ENCODE measurements at regions of chr2 and their contacts with region 1.

Region 1: GRCh38 chr2:75466708-75467311 is 93.9 kb downstream of the EVA1A start:
- DNase-seq: peak; percentile 22
- H3K4me3 ChIP-seq: peak overlapping the region in 1 of 2 experiments; percentile 37; a peak in 1 of 4 replicates
- H3K27ac ChIP-seq: no peak overlapping the region
- H3K4me1 ChIP-seq: peaks cover 0 to 6% of the 10 kb centered on the region in 2 experiments; a peak in 3 of 4 replicates
- H3K27me3 ChIP-seq: no peaks in the 10 kb centered on the region
- CTCF ChIP-seq: peak; percentile 65
- EP300 ChIP-seq: no peak
- RAD21 ChIP-seq: peak; percentile 34; the same call in 1 of the 2 replicates

Region 2: GRCh38 chr2:75454241-75454620 is 12.6 kb before region 1 on chr2:
- CTCF ChIA-PET with region 1: interaction called, 26 read pairs
- POLR2A ChIA-PET with region 1: no interaction called
- DNase-seq: no peak
- H3K4me3 ChIP-seq: no peak overlapping the region
- H3K27ac ChIP-seq: no peak overlapping the region
- H3K4me1 ChIP-seq: no peaks in the 10 kb centered on the region
- H3K27me3 ChIP-seq: no peaks in the 10 kb centered on the region
- CTCF ChIP-seq: no peak
- EP300 ChIP-seq: no peak
- RAD21 ChIP-seq: no peak

Region 3: GRCh38 chr2:75491129-75491753 is 24.4 kb after region 1 on chr2:
- CTCF ChIA-PET with region 1: interaction called, 12 read pairs
- POLR2A ChIA-PET with region 1: no interaction called
- DNase-seq: no peak
- H3K4me3 ChIP-seq: no peak overlapping the region
- H3K27ac ChIP-seq: no peak overlapping the region
- H3K4me1 ChIP-seq: peaks cover 6 to 16% of the 10 kb centered on the region in 2 experiments; a peak in 2 of 4 replicates
- H3K27me3 ChIP-seq: no peaks in the 10 kb centered on the region
- CTCF ChIP-seq: no peak
- EP300 ChIP-seq: no peak
- RAD21 ChIP-seq: no peak

Region 4: GRCh38 chr2:75595551-75596395 is 129.0 kb after region 1 on chr2:
- CTCF ChIA-PET with region 1: interaction called, 81 read pairs
- POLR2A ChIA-PET with region 1: no interaction called
- DNase-seq: no peak
- H3K4me3 ChIP-seq: peak overlapping the region in 1 of 2 experiments; percentile 25; a peak in 1 of 4 replicates
- H3K27ac ChIP-seq: peak overlapping the region; percentile 81 to 97; a peak in 3 of 4 replicates
- H3K4me1 ChIP-seq: peaks cover 0 to 43% of the 10 kb centered on the region in 2 experiments
- H3K27me3 ChIP-seq: no peaks in the 10 kb centered on the region
- CTCF ChIP-seq: no peak
- EP300 ChIP-seq: peak in 1 of 2 experiments; percentile 86; a peak in 2 of 4 replicates
- RAD21 ChIP-seq: no peak

Region 5: DNA sequence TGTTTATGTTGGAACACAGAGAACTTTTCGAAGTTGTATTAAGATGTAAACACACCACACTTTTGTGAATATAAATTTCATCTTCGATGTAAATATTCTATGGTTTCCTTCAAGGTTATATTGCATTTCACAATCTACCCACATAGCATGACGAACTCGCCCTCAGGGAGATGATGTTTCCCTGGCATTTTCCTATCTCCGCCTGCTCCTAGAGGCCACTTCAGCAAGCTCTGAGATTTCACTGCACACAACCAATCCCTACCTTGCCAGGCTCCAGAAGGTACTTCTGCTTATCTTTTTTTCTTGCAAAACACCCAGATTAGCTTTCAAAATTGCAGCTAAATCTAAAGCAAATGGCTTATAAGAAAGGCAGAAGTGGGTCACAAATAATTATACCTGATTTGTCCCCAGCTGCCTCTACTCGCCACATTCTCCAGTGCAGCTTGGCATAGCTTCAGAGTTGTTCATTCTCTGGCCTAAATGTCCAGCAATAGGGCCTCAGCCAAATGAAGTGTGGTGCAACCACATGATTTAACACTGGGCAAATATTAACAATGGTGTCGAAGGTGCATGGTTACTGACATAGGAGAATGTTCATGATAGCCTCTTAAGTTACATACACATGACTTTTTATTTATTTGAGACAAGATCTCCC is 147.4 kb after region 1 on chr2:
- CTCF ChIA-PET with region 1: interaction called, 238 read pairs
- POLR2A ChIA-PET with region 1: no interaction called
- DNase-seq: no peak
- H3K4me3 ChIP-seq: no peak overlapping the region
- H3K27ac ChIP-seq: no peak overlapping the region
- H3K4me1 ChIP-seq: no peaks in the 10 kb centered on the region
- H3K27me3 ChIP-seq: no peaks in the 10 kb centered on the region
- CTCF ChIP-seq: no peak
- EP300 ChIP-seq: no peak
- RAD21 ChIP-seq: no peak

Region 6: DNA sequence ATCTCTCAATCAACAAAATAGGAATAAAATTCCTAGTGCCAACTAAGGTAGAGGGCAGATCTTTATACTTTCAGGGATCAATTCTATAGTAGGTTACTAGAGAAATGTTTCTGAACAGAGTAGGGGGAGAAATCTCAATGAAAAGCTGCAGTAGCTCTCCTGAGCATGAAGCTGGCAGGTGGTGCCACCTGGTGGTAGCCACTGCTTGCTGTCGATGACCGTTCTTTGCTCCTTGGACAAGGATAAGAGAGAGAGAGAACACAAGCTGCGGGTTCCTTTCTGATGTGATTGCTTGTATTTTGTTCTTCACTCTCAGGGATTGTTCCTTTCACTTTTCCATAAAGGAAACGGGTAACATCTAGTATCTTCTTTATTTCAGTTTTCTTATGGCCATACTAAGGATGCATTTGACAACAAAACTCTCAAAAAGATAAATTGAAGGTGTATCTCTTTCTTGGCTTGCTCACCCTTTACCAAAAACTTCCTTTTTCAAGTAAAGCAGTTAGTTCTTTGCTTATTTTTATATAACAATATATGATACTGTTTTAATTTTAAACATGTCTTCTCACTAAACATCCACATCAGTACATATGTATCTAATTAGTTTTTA is 161.2 kb after region 1 on chr2:
- CTCF ChIA-PET with region 1: interaction called, 87 read pairs
- POLR2A ChIA-PET with region 1: no interaction called
- DNase-seq: peak; percentile 64
- H3K4me3 ChIP-seq: peak overlapping the region in 1 of 2 experiments; percentile 53; a peak in 1 of 4 replicates
- H3K27ac ChIP-seq: no peak overlapping the region
- H3K4me1 ChIP-seq: peaks cover 5 to 8% of the 10 kb centered on the region in 2 experiments
- H3K27me3 ChIP-seq: no peaks in the 10 kb centered on the region
- CTCF ChIP-seq: peak; percentile 97
- EP300 ChIP-seq: no peak
- RAD21 ChIP-seq: peak; percentile 87

Region 7: DNA sequence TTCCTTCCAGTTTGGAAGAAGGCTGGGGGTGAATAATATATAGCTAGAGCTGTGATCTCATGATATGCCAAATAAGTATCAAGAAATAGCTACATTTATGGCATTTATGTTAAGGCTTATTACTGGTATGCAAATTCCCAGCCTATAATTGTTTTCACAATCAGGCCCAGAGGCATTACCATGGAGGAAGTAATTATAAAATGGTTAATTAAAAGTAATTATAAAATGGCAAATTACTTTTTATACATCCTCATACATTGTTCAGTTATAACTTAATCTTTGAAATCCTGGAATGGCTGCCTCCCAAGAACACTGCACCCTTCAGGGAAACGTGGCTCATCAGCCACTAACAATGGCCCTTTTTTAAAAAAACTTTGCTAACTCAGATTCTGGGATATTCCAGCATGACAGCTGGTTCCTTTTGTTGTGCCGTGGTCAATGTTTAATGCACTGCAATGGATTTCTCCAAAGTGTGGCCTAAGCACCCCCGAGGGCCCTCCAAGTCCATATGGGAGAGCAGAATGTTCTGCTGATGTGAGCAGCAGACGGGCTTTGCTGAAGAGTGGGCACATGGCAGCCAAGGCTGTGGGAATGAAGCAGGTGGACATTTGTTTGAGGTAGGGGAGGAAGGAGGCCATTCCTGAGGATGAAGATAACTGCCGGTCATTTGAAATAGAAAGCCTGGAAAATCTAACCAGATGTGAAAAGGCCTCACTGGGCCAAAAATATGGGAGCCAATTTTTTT is 727.4 kb after region 1 on chr2:
- CTCF ChIA-PET with region 1: no interaction called
- POLR2A ChIA-PET with region 1: no interaction called
- DNase-seq: no peak
- H3K4me3 ChIP-seq: no peak overlapping the region
- H3K27ac ChIP-seq: no peak overlapping the region
- H3K4me1 ChIP-seq: no peaks in the 10 kb centered on the region
- H3K27me3 ChIP-seq: no peaks in the 10 kb centered on the region
- CTCF ChIP-seq: no peak
- EP300 ChIP-seq: no peak
- RAD21 ChIP-seq: no peak

Measured in SK-N-SH (cell line).